ENCODE measurements at regions of chr12 and their contacts with region 1.

Region 1: DNA sequence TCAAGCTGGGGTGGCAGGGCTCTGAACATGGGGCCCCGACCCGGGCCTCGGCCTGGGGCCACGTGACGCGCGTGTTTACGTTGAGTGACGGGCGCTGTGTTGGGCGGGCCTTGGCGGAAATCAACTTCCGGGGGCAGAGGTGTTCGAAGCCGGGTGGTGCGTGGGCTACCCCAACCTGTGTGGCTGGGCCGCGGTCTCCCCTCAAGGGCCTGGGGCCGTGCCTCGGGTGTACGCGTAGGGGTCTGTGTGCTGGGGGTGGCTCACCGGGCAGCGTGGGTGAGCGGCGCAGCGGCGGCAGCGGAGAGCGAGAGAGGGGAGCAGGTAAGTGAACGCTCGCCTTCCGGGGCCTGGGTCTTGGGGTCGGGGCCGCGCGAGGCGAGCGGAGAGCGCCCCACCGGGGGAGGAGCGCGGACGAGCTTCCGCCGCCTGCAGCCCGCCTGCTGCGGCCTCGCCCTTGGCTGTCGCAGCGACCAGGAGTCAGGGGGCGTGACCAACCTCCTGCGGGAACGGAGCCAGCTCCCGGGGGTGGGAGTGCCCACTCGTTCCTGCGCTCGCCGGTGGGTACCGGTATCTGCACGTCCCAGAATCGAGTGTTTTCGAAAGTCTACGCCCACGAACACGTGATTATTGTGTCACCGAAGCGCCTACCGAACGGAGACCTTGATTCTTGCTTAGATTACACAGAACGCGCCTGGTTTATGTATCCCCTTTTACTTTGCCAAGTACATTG is at the start of gene CCDC91:
- DNase-seq: peak; percentile 84
- ATAC-seq: peak; percentile 78
- H3K4me3 ChIP-seq: peak within 1 kb of the TSS; percentile 76
- H3K27ac ChIP-seq: peak within 1 kb of the TSS; percentile 88
- H3K4me1 ChIP-seq: peaks cover 19% of the 10 kb centered on the region
- H3K27me3 ChIP-seq: no peaks in the 10 kb centered on the region
- CTCF ChIP-seq: no peak
- total RNA-seq, gene CCDC91: 15.7 and 22.2 TPM in 2 replicates

Region 2: GRCh38 chr12:28035500-28035899 is 155.0 kb before region 1 on chr12:
- CTCF ChIA-PET with region 1: no interaction called
- POLR2A ChIA-PET with region 1: no interaction called
- intact Hi-C with region 1: no loop called
- DNase-seq: peak; percentile 100
- ATAC-seq: peak; percentile 52
- H3K4me3 ChIP-seq: no peak overlapping the region
- H3K27ac ChIP-seq: peak overlapping the region; percentile 77
- H3K4me1 ChIP-seq: peaks cover 40% of the 10 kb centered on the region
- H3K27me3 ChIP-seq: no peaks in the 10 kb centered on the region
- CTCF ChIP-seq: no peak

Region 3: DNA sequence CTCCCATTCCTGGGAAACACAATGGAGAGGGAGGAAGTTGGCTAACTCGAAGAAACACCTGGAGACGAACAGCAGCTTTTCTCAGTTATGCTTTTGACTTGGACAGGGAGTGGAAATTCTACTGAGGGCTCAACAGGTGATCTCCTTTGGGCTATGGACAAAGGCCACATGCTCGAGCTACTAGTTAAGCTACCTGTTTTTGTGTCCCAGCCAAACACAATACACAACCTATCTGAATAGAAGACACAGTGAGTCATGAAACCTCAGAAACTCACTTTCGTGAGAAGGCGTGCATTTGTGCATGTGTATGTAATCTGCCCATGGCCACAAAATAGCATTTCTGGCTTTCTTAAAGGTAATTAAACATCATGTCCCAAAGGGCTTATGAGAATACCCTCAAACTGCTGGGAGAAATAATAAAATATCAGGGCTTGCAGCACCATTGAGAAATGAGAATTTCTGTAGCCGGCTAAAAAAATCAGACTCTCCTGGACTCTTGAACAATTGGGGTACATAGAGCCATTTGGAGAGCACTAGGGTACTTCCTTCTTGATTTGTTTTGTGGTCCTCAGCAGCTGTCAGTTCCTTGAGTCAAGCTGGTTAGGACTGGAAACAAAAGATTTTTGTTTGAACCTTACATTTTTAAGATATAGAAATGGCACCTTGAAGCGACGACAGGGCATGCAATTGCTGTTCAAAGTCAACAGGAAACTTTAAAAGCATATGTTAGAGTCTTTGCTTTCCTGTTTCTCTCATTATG is 132.4 kb before region 1 on chr12:
- CTCF ChIA-PET with region 1: no interaction called
- POLR2A ChIA-PET with region 1: no interaction called
- intact Hi-C with region 1: no loop called
- DNase-seq: peak; percentile 100
- ATAC-seq: peak; percentile 83
- H3K4me3 ChIP-seq: no peak overlapping the region; the same call in 1 of the 2 replicates
- H3K27ac ChIP-seq: peak overlapping the region; percentile 86
- H3K4me1 ChIP-seq: peaks cover 23% of the 10 kb centered on the region
- H3K27me3 ChIP-seq: no peaks in the 10 kb centered on the region
- CTCF ChIP-seq: no peak

Region 4: DNA sequence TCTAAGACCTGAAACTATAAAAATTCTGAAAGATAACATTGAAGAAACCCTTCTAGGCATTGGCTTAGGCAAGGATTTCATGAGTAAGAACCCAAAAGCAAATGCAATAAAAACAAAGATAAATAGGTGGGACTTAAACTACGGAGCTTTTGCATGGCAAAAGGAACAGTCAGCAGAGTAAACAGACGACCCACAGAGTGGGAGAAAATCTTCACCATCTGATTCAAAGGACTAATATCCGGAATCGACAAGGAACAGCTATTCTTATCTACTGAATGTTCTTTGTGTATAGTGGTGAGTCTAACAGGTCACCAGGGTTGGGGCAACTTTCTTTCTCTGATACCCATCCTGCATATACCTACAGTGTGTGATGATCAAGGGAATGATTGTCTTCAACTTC is 198.4 kb after region 1 on chr12:
- CTCF ChIA-PET with region 1: no interaction called
- POLR2A ChIA-PET with region 1: no interaction called
- intact Hi-C with region 1: loop called (anchors 10 kb)
- DNase-seq: peak; percentile 81
- ATAC-seq: peak; percentile 93
- H3K4me3 ChIP-seq: no peak overlapping the region
- H3K27ac ChIP-seq: peak overlapping the region; percentile 73
- H3K4me1 ChIP-seq: peaks cover 14% of the 10 kb centered on the region
- H3K27me3 ChIP-seq: no peaks in the 10 kb centered on the region
- CTCF ChIP-seq: no peak

Region 5: DNA sequence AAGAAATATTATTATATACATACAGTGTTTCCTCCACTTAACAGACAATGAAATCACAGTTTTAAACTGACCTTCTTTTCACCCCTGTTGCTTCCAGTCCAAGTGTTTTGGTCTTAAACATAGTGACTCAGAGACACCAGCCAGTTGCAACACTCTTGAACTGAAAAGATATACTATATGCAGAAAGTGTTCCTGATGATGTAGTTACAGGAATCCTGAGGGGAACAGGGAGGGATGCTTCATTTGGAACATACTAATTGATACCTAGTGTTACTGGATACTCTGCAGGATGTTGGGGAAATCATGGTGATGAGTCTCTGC is 420.6 kb after region 1 on chr12:
- CTCF ChIA-PET with region 1: no interaction called
- POLR2A ChIA-PET with region 1: no interaction called
- intact Hi-C with region 1: loop called (anchors 10 kb)
- DNase-seq: peak; percentile 91
- ATAC-seq: peak; percentile 92
- H3K4me3 ChIP-seq: no peak overlapping the region
- H3K27ac ChIP-seq: peak overlapping the region; percentile 65
- H3K4me1 ChIP-seq: peaks cover 24% of the 10 kb centered on the region
- H3K27me3 ChIP-seq: no peaks in the 10 kb centered on the region
- CTCF ChIP-seq: no peak

Measured in PC-3 (cell line).